AG04450 (cell line): ENCODE measurements at regions of chr6 and their contacts with region 1.

Region 1: DNA sequence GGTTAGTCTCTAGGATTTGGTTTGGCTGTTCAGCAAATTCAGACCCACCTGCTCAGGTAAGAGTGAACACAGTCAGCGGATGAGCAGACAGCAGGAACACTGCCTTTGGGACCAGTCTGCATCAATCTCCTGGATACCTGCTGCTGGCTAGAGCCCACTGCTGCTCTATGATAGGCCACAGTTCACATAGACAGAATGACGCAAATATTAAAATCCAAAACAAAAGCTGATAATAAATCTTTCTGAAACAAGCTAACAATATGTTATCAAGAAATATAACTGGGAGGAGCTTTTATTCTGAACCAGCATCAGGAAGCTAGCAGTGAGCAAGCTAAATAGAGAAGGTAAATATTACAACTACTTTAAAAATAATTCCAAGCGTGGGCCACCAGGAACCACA is at the start of gene TAAR1:
- DNase-seq: no peak
- H3K4me3 ChIP-seq: no peak within 1 kb of the TSS
- H3K27ac ChIP-seq: no peak within 1 kb of the TSS
- H3K27me3 ChIP-seq: no peaks in the 10 kb centered on the region
- CTCF ChIP-seq: no peak
- polyA plus RNA-seq, gene TAAR1: not detected in 2 replicates

Region 2: GRCh38 chr6:132715204-132715603 is 56.1 kb after region 1 on chr6:
- CTCF ChIA-PET with region 1: interaction called, 10 read pairs
- POLR2A ChIA-PET with region 1: no interaction called
- DNase-seq: peak; percentile 52
- H3K4me3 ChIP-seq: no peak overlapping the region
- H3K27ac ChIP-seq: no peak overlapping the region
- H3K27me3 ChIP-seq: no peaks in the 10 kb centered on the region
- CTCF ChIP-seq: peak; percentile 61

Region 3: GRCh38 chr6:132843316-132844043 is 184.4 kb after region 1 on chr6:
- CTCF ChIA-PET with region 1: no interaction called
- POLR2A ChIA-PET with region 1: no interaction called
- DNase-seq: no peak
- H3K4me3 ChIP-seq: no peak overlapping the region
- H3K27ac ChIP-seq: no peak overlapping the region
- H3K27me3 ChIP-seq: no peaks in the 10 kb centered on the region
- CTCF ChIP-seq: no peak